A549 (cell line): ENCODE measurements at regions of chr2 and their contacts with region 1.

Region 1: GRCh38 chr2:27703638-27704341 is 40.1 kb downstream of the SLC4A1AP start:
- DNase-seq: peak; percentile 90
- ATAC-seq: peak; percentile 68 to 77
- H3K4me3 ChIP-seq: no peak overlapping the region
- H3K27ac ChIP-seq: peak overlapping the region; percentile 91 to 99
- H3K4me1 ChIP-seq: peaks cover 65% of the 10 kb centered on the region
- CTCF ChIP-seq: peak; percentile 98
- EP300 ChIP-seq: no peak
- POLR2A ChIP-seq: no peak
- RAD21 ChIP-seq: peak; percentile 99

Region 2: GRCh38 chr2:27715318-27716210 is 11.8 kb after region 1 on chr2:
- CTCF ChIA-PET with region 1: interaction called, 167 read pairs
- POLR2A ChIA-PET with region 1: interaction called, 5 read pairs
- DNase-seq: peak in 1 of 2 experiments; percentile 61
- ATAC-seq: peak; percentile 49 to 55
- H3K4me3 ChIP-seq: peak overlapping the region; percentile 54
- H3K27ac ChIP-seq: peak overlapping the region; percentile 98 to 99
- H3K4me1 ChIP-seq: peaks cover 70% of the 10 kb centered on the region
- CTCF ChIP-seq: no peak
- EP300 ChIP-seq: peak in 1 of 2 experiments; percentile 46; a peak in 1 of 5 replicates
- POLR2A ChIP-seq: peak; percentile 4; the same call in 1 of the 2 replicates
- RAD21 ChIP-seq: no peak

Region 3: GRCh38 chr2:27754138-27754588 is 50.4 kb after region 1 on chr2:
- CTCF ChIA-PET with region 1: interaction called, 19 read pairs
- POLR2A ChIA-PET with region 1: no interaction called
- DNase-seq: peak; percentile 53 to 85
- ATAC-seq: peak; percentile 97 to 99
- H3K4me3 ChIP-seq: no peak overlapping the region
- H3K27ac ChIP-seq: peak overlapping the region; percentile 74 to 82
- H3K4me1 ChIP-seq: peaks cover 26% of the 10 kb centered on the region
- CTCF ChIP-seq: peak; percentile 96
- EP300 ChIP-seq: no peak
- POLR2A ChIP-seq: no peak
- RAD21 ChIP-seq: peak; percentile 98 to 100

Region 4: GRCh38 chr2:27798948-27799645 is 95.3 kb after region 1 on chr2:
- CTCF ChIA-PET with region 1: interaction called, 14 read pairs
- POLR2A ChIA-PET with region 1: interaction called, 4 read pairs
- DNase-seq: peak; percentile 94 to 99
- ATAC-seq: peak; percentile 95 to 96
- H3K4me3 ChIP-seq: no peak overlapping the region
- H3K27ac ChIP-seq: peak overlapping the region; percentile 89 to 97
- H3K4me1 ChIP-seq: peaks cover 56% of the 10 kb centered on the region
- CTCF ChIP-seq: no peak
- EP300 ChIP-seq: peak; percentile 97 to 99
- POLR2A ChIP-seq: no peak
- RAD21 ChIP-seq: peak; percentile 49 to 61; a peak in 4 of 5 replicates

Region 5: GRCh38 chr2:28392297-28393113 is 688.7 kb after region 1 on chr2 and contains the start of gene FOSL2:
- CTCF ChIA-PET with region 1: interaction called, 29 read pairs
- POLR2A ChIA-PET with region 1: interaction called, 8 read pairs
- DNase-seq: peak; percentile 98 to 100
- ATAC-seq: peak; percentile 49 to 76
- H3K4me3 ChIP-seq: peak within 1 kb of the TSS; percentile 78
- H3K27ac ChIP-seq: peak within 1 kb of the TSS; percentile 95
- H3K4me1 ChIP-seq: peaks cover 21% of the 10 kb centered on the region
- CTCF ChIP-seq: no peak; the same call in 2 of the 3 replicates
- EP300 ChIP-seq: peak; percentile 38 to 68; a peak in 2 of 5 replicates
- POLR2A ChIP-seq: peak; percentile 74
- RAD21 ChIP-seq: peak; percentile 46; a peak in 4 of 5 replicates
- polyA plus RNA-seq, gene FOSL2: 45.7 and 50.6 TPM in 2 replicates

Region 6: DNA sequence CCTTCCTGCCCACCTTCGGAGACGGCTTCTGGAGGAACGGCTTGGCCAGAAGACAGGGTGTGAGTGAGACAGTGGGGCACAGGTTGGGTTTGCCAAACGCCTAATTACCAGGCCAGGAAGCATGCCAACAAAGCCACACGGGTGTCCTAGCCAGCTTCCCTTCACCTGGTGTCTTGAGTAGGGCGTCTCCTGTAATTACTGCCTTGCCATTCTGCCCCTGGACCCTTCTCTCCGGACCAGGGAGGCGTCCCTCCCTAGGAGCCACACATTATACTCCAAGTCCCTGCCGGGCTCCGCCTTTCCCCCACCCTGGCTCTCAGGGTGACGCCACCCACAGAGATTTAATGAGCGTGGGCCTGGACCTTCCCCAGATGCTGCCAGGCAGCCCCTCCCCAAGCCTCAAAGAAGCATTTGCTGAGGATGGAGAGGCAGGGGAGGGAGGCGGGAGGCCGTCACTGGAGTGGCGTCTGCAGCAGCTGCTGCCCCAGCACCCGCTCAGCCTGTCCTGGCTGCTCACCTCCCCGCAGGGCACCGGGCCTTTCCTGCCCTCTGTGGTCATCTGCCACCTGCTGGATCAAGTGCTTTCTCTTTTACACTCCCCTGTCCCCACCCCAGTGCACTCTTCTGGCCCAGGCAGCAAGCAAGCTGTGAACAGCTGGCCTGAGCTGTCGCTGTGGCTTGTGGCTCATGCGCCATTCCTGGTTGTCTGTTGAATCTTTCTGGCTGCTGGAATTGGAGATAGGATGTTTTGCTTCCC is 709.5 kb after region 1 on chr2:
- CTCF ChIA-PET with region 1: interaction called, 11 read pairs
- POLR2A ChIA-PET with region 1: no interaction called
- DNase-seq: peak in 1 of 2 experiments; percentile 51
- ATAC-seq: peak; percentile 40 to 63; a peak in 5 of 6 replicates
- H3K4me3 ChIP-seq: no peak overlapping the region
- H3K27ac ChIP-seq: peak overlapping the region in 1 of 2 experiments; percentile 38; a peak in 3 of 6 replicates
- H3K4me1 ChIP-seq: peaks cover 45% of the 10 kb centered on the region
- CTCF ChIP-seq: no peak
- EP300 ChIP-seq: no peak
- POLR2A ChIP-seq: no peak
- RAD21 ChIP-seq: peak in 1 of 2 experiments; percentile 29; a peak in 1 of 5 replicates

Region 7: DNA sequence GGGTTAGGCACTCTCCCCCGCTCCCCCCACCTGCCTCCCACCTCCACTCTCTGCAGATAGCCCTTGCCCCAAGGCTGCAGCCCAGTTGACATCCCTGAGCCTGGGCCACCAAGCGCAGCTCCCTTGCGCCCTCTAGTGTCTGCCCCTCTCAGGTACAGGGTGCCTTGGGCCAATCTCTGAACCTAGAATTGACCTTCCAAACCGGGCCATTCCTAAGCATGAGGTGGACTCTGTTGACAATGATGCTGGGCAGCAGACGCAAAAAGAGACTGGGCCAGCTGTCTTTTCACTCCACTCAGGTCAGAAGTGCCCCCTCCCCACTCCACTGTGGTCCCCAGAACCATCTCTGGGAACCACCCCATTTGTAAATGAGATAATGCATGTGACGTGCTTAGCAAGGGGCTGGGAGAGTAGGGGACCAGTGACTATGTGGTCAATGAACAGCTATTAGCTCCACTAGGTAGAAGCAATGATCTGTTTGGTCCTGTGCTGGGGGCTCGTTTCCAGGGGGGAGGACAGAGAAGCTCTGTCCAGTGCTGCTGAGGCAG is 748.8 kb after region 1 on chr2:
- CTCF ChIA-PET with region 1: interaction called, 36 read pairs
- POLR2A ChIA-PET with region 1: no interaction called
- DNase-seq: peak; percentile 65 to 70
- ATAC-seq: peak; percentile 75 to 92
- H3K4me3 ChIP-seq: no peak overlapping the region
- H3K27ac ChIP-seq: peak overlapping the region; percentile 70 to 87
- H3K4me1 ChIP-seq: peaks cover 44% of the 10 kb centered on the region
- CTCF ChIP-seq: peak; percentile 94
- EP300 ChIP-seq: no peak
- POLR2A ChIP-seq: no peak
- RAD21 ChIP-seq: peak; percentile 98 to 99